Panc1 (cell line): ENCODE measurements at regions of chr1 and their contacts with region 1.

Region 1: GRCh38 chr1:174451408-174451807 is 3.6 kb downstream of the GPR52 start:
- DNase-seq: no peak
- ATAC-seq: no peak
- H3K4me3 ChIP-seq: no peak overlapping the region
- H3K27ac ChIP-seq: no peak overlapping the region
- H3K4me1 ChIP-seq: no peaks in the 10 kb centered on the region
- H3K27me3 ChIP-seq: no peaks in the 10 kb centered on the region
- CTCF ChIP-seq: no peak

Region 2: DNA sequence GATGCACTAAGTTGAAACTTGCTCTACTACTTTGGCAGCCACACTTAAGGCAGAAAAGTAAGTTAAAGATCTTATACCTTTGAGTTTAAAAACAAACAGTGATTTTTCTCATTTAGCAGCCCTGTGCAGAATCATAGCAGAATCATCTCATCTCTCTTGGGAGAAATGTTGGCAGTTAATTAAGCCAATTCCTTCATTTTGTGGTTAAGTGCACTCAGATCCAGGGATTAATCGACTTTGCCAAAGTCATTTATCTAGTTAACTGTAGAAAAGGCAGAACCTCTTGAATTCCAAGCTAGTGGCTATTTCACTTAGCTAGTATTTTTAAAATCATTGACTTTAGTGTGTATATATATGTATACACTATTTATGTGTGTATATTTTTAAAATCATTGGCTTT is 121.4 kb after region 1 on chr1:
- CTCF ChIA-PET with region 1: no interaction called
- POLR2A ChIA-PET with region 1: no interaction called
- in situ Hi-C with region 1: no loop called
- intact Hi-C with region 1: no loop called
- DNase-seq: no peak
- ATAC-seq: no peak
- H3K4me3 ChIP-seq: no peak overlapping the region
- H3K27ac ChIP-seq: no peak overlapping the region
- H3K4me1 ChIP-seq: no peaks in the 10 kb centered on the region
- H3K27me3 ChIP-seq: no peaks in the 10 kb centered on the region
- CTCF ChIP-seq: no peak

Region 3: DNA sequence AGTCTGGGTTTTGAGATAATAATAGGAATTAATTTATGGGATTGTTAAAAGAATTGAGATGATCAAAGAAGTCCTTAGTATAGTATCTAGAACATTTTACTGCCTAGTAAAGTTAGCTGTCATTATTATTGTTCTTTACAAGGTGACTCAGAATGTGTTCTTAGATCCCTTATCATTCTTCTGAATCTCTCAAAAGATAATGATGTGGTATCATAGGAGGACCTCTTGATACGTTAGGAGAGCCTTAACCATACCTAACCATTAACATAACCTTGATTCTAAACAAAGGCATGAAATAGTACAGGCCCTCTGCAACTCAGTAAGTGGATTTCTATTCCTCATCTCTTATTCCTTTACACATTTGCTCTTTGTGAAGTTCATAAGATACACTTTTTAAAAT is 301.7 kb after region 1 on chr1:
- CTCF ChIA-PET with region 1: interaction called, 12 read pairs
- POLR2A ChIA-PET with region 1: no interaction called
- in situ Hi-C with region 1: no loop called
- intact Hi-C with region 1: no loop called
- DNase-seq: no peak
- ATAC-seq: no peak
- H3K4me3 ChIP-seq: no peak overlapping the region
- H3K27ac ChIP-seq: no peak overlapping the region
- H3K4me1 ChIP-seq: no peaks in the 10 kb centered on the region
- H3K27me3 ChIP-seq: no peaks in the 10 kb centered on the region
- CTCF ChIP-seq: no peak